ENCODE measurements at regions of chr9 and their contacts with region 1.

Region 1: GRCh38 chr9:27194401-27195091 is 85.5 kb downstream of the TEK start:
- DNase-seq: peak; percentile 82
- H3K4me3 Mint-ChIP-seq: peak overlapping the region; percentile 13
- H3K27ac Mint-ChIP-seq: peak overlapping the region; percentile 84
- H3K4me1 Mint-ChIP-seq: peaks cover 36% of the 10 kb centered on the region
- H3K27me3 Mint-ChIP-seq: no peaks in the 10 kb centered on the region
- CTCF ChIP-seq: no peak

Region 2: GRCh38 chr9:27033823-27034403 is 160.6 kb before region 1 on chr9:
- CTCF ChIA-PET with region 1: interaction called, 13 read pairs
- POLR2A ChIA-PET with region 1: interaction called, 5 read pairs
- intact Hi-C with region 1: loop called (anchors 1 kb)
- DNase-seq: peak; percentile 71
- H3K4me3 Mint-ChIP-seq: no peak overlapping the region
- H3K27ac Mint-ChIP-seq: no peak overlapping the region
- H3K4me1 Mint-ChIP-seq: peaks cover 6% of the 10 kb centered on the region
- H3K27me3 Mint-ChIP-seq: no peaks in the 10 kb centered on the region
- CTCF ChIP-seq: peak; percentile 64

Region 3: GRCh38 chr9:27125030-27125429 is 69.5 kb before region 1 on chr9:
- CTCF ChIA-PET with region 1: no interaction called
- POLR2A ChIA-PET with region 1: interaction called, 12 read pairs
- intact Hi-C with region 1: no loop called
- DNase-seq: peak; percentile 93
- H3K4me3 Mint-ChIP-seq: no peak overlapping the region
- H3K27ac Mint-ChIP-seq: peak overlapping the region; percentile 78
- H3K4me1 Mint-ChIP-seq: peaks cover 43% of the 10 kb centered on the region
- H3K27me3 Mint-ChIP-seq: no peaks in the 10 kb centered on the region
- CTCF ChIP-seq: no peak